ENCODE measurements at regions of chr2 and their contacts with region 1.

Region 1: GRCh38 chr2:201118121-201118960 is 2.4 kb downstream of the CFLAR start:
- DNase-seq: peak; percentile 87
- ATAC-seq: peak; percentile 40
- H3K4me3 ChIP-seq: peak overlapping the region; percentile 75
- H3K27ac ChIP-seq: peak overlapping the region; percentile 96
- H3K4me1 ChIP-seq: peaks cover 17% of the 10 kb centered on the region
- H3K27me3 ChIP-seq: no peaks in the 10 kb centered on the region
- CTCF ChIP-seq: peak; percentile 70

Region 2: GRCh38 chr2:200963124-200963917 is 155.0 kb before region 1 on chr2 and contains the start of gene ORC2:
- CTCF ChIA-PET with region 1: no interaction called
- POLR2A ChIA-PET with region 1: no interaction called
- intact Hi-C with region 1: loop called (anchors 1 kb)
- DNase-seq: peak; percentile 99
- ATAC-seq: peak; percentile 93
- H3K4me3 ChIP-seq: peak within 1 kb of the TSS; percentile 81
- H3K27ac ChIP-seq: peak within 1 kb of the TSS; percentile 58
- H3K4me1 ChIP-seq: peaks cover 55% of the 10 kb centered on the region
- H3K27me3 ChIP-seq: no peaks in the 10 kb centered on the region
- CTCF ChIP-seq: peak; percentile 68
- total RNA-seq, gene ORC2: 17.7 and 25.9 TPM in 2 replicates

Region 3: DNA sequence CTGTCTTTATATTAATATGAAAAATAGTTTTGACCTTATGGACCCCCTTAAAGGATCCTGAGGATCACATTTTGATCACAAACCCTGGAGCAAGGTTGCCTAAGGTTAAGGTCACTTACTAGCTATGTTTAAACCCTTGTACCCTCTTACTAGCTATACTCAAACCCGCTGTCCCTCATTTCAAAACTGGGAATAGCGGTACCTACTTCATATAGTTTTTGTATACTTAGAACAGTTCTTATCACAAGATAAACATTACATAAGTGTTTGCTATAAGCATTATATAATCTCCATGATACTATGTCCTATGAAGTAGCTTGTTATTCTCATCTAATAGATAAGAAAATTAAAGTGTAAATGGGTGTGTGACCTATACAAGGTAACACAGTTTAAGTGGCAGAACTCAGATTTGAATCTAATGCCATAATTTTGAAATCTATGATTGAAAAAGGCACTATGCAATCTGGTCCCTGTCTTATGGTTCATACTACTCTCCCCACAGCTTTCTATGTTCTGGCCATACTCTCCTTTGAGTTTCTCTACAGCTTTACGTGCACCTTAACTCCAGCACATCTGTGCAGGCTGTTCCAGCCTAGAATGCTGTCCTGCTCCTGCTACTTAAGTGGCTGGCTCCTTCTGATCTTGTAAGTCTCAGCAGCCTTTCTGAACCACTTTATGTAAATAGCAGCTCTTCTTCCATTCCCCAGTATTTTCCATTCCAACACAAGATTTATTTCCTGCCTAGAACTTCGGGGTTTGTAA is 77.3 kb before region 1 on chr2:
- CTCF ChIA-PET with region 1: no interaction called
- POLR2A ChIA-PET with region 1: no interaction called
- intact Hi-C with region 1: no loop called
- DNase-seq: no peak
- ATAC-seq: no peak
- H3K4me3 ChIP-seq: no peak overlapping the region
- H3K27ac ChIP-seq: no peak overlapping the region
- H3K4me1 ChIP-seq: no peaks in the 10 kb centered on the region
- H3K27me3 ChIP-seq: no peaks in the 10 kb centered on the region
- CTCF ChIP-seq: no peak

Region 4: DNA sequence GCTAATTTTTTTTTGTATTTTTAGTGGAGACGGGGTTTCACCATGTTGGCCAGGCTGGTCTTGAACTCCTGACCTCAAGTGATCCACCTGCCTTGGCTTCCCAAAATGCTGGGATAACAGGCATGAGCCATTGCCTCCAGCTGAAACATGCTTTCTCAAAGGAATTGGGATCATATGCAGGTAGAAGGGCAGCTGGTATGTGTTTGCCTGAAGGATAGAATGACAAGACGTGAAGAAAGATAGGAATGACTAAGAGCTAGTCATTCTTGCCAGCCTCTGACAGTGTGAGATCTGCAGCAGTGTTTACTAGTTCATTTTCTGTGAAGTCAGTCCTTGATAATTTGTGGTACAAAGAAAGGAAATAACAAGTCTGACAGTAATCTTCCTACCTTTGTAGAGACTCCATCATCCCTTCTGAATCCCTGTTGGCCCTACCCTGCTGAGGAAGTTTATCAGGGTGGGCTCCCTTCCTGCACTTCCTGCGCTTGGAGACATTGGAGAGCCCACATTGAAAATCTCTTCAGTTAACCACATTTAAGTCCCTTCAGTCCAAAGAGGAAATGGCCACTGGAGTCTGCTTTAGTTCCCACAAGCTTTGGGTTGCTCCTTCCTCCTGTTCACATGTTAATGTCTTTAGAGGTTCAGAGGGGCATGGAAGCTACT is 12.3 kb after region 1 on chr2:
- CTCF ChIA-PET with region 1: no interaction called
- POLR2A ChIA-PET with region 1: interaction called, 16 read pairs
- intact Hi-C with region 1: loop called (anchors 2 kb)
- DNase-seq: peak; percentile 88
- ATAC-seq: peak; percentile 97
- H3K4me3 ChIP-seq: no peak overlapping the region
- H3K27ac ChIP-seq: peak overlapping the region; percentile 79
- H3K4me1 ChIP-seq: peaks cover 27% of the 10 kb centered on the region
- H3K27me3 ChIP-seq: no peaks in the 10 kb centered on the region
- CTCF ChIP-seq: no peak

Region 5: DNA sequence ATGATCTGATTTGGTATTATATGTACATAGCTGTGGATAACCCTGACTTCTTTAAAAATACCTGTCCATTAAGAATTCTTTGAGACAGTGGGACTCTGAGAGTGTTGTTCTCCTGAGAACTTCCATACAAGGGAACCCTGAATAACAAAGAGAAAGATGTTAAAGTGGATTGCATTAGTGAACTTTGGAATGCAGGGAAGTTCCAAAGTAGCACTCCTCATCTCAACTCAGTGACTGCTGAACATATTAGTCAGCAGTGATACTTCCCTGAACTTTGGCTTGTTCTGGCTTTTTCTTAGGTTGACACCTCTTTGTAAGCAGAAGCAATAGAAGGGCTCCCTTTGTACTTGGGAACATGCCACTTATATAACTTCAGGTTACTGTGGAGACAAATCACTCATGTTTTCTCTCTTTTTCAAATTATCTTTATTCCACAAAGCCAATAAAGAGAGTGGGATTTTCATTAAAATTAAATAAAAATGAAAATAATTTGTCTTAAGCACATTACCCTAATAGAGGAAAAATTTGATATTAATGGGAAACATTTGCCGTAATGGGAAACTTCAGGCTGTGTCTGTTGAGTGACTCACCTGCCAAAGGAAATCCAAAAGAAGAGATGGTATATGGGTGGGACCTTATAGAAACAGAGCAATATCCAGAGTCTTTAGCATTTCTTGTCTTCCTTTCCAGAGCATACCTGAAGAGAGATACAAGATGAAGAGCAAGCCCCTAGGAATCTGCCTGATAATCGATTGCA is 30.9 kb after region 1 on chr2:
- CTCF ChIA-PET with region 1: interaction called, 4 read pairs
- POLR2A ChIA-PET with region 1: interaction called, 9 read pairs
- intact Hi-C with region 1: loop called (anchors 2 kb)
- DNase-seq: peak; percentile 94
- ATAC-seq: peak; percentile 68
- H3K4me3 ChIP-seq: peak overlapping the region; percentile 52
- H3K27ac ChIP-seq: peak overlapping the region; percentile 89
- H3K4me1 ChIP-seq: peaks cover 46% of the 10 kb centered on the region
- H3K27me3 ChIP-seq: no peaks in the 10 kb centered on the region
- CTCF ChIP-seq: no peak

Region 6: DNA sequence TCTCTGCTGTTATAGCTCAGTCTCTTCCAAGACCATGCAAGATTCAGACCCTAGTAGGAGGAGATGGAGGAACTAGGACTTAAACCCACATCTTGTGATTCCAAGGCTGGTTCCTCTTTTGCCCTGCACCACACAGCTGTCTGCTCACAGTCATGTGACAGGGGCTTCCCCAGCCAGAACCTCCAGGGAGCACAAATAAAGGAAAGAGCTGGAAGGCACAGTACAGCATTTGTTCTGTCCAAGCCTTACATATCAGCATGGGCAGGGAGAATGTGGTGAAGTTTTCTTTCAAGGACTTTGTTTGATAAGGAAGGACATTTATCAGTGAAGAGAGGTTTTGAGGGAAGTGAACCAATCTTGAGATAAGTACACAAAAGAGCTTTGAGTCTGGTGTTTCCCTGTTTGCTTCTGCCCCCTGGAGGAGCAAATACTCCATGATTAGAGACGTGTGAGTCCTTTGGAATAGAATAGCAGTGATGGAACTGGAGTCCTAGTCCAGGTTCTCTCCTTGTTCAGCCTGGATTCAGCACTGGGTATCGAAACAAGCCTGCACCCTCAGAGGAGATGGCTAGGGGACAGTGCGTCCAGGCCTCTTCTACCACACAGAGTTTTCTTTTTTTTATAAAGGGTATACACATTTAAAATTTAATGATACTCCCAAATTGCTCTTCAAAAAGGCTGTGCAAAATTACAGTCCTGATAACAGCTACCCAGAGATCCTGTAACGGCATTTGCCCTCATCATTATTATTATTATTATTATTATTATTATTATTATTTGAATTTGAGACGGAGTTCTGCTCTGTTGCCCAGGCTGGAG is 40.0 kb after region 1 on chr2:
- CTCF ChIA-PET with region 1: interaction called, 27 read pairs
- POLR2A ChIA-PET with region 1: interaction called, 4 read pairs
- intact Hi-C with region 1: loop called (anchors 1 kb)
- DNase-seq: peak; percentile 86
- ATAC-seq: peak; percentile 87
- H3K4me3 ChIP-seq: no peak overlapping the region
- H3K27ac ChIP-seq: peak overlapping the region; percentile 86
- H3K4me1 ChIP-seq: peaks cover 9% of the 10 kb centered on the region
- H3K27me3 ChIP-seq: no peaks in the 10 kb centered on the region
- CTCF ChIP-seq: peak; percentile 90

Region 7: GRCh38 chr2:201176081-201176481 is 57.7 kb after region 1 on chr2:
- CTCF ChIA-PET with region 1: interaction called, 5 read pairs
- POLR2A ChIA-PET with region 1: interaction called, 3 read pairs
- intact Hi-C with region 1: loop called (anchors 5 kb)
- DNase-seq: no peak
- ATAC-seq: no peak
- H3K4me3 ChIP-seq: no peak overlapping the region
- H3K27ac ChIP-seq: no peak overlapping the region
- H3K4me1 ChIP-seq: no peaks in the 10 kb centered on the region
- H3K27me3 ChIP-seq: no peaks in the 10 kb centered on the region
- CTCF ChIP-seq: no peak

Region 8: GRCh38 chr2:201220102-201220570 is 101.8 kb after region 1 on chr2:
- CTCF ChIA-PET with region 1: no interaction called
- POLR2A ChIA-PET with region 1: no interaction called
- intact Hi-C with region 1: no loop called
- DNase-seq: no peak
- ATAC-seq: peak; percentile 19; the same call in 1 of the 2 replicates
- H3K4me3 ChIP-seq: no peak overlapping the region
- H3K27ac ChIP-seq: no peak overlapping the region
- H3K4me1 ChIP-seq: peaks cover 7% of the 10 kb centered on the region; the same call in 1 of the 2 replicates
- H3K27me3 ChIP-seq: no peaks in the 10 kb centered on the region
- CTCF ChIP-seq: no peak

Region 9: GRCh38 chr2:201517094-201517493 is 398.8 kb after region 1 on chr2:
- CTCF ChIA-PET with region 1: no interaction called
- POLR2A ChIA-PET with region 1: no interaction called
- intact Hi-C with region 1: no loop called
- DNase-seq: no peak
- ATAC-seq: no peak
- H3K4me3 ChIP-seq: no peak overlapping the region
- H3K27ac ChIP-seq: no peak overlapping the region
- H3K4me1 ChIP-seq: no peaks in the 10 kb centered on the region
- H3K27me3 ChIP-seq: no peaks in the 10 kb centered on the region
- CTCF ChIP-seq: no peak

Measured in PC-3 (cell line).